ENCODE measurements at regions of chr3 and their contacts with region 1.

Region 1: GRCh38 chr3:188283347-188283746 is 129.4 kb downstream of the LPP start:
- DNase-seq: no peak
- H3K4me3 ChIP-seq: no peak overlapping the region
- H3K27ac ChIP-seq: no peak overlapping the region
- H3K4me1 ChIP-seq: peaks cover 37% of the 10 kb centered on the region
- H3K27me3 ChIP-seq: no peaks in the 10 kb centered on the region
- CTCF ChIP-seq: peak in 1 of 2 donors; percentile 32

Region 2: GRCh38 chr3:188000361-188000861 is 282.9 kb before region 1 on chr3:
- CTCF ChIA-PET with region 1: no interaction called
- dilution Hi-C with region 1: no loop called
- in situ Hi-C with region 1: no loop called
- intact Hi-C with region 1: no loop called
- DNase-seq: no peak
- H3K4me3 ChIP-seq: no peak overlapping the region
- H3K27ac ChIP-seq: no peak overlapping the region
- H3K4me1 ChIP-seq: no peaks in the 10 kb centered on the region
- H3K27me3 ChIP-seq: no peaks in the 10 kb centered on the region
- CTCF ChIP-seq: no peak

Region 3: DNA sequence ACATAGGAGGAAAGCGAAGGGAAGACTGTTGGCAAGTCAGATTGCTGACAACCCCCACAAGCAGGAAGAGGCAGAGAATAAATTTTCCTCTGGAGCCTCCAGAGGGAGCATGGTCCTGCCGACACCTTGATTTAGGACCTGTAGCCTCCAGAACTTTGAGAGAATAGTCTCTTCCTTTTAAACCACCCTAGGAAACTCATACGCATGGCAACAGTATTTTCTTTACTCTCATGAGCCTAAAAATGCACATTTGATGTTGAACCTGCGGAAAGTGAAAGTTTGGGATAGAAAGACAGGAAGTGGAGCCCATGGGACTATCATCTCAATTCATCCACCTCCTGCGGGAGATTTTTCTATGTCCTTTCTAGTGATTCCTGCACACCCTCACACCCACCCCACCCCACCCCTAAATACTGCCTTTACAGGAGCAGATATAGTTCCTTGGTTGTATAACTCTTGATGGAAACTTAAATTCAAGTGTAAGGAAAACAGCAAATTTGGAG is 246.1 kb before region 1 on chr3:
- CTCF ChIA-PET with region 1: no interaction called
- dilution Hi-C with region 1: no loop called
- in situ Hi-C with region 1: no loop called
- intact Hi-C with region 1: loop called (anchors 5 kb)
- DNase-seq: peak; percentile 48
- H3K4me3 ChIP-seq: no peak overlapping the region
- H3K27ac ChIP-seq: no peak overlapping the region
- H3K4me1 ChIP-seq: peaks cover 11% of the 10 kb centered on the region
- H3K27me3 ChIP-seq: no peaks in the 10 kb centered on the region
- CTCF ChIP-seq: peak; percentile 40 to 58

Measured in mammary epithelial cell (primary cell).